ENCODE measurements at regions of chr14 and their contacts with region 1.

Region 1: GRCh38 chr14:58427281-58428117 is at the starts of genes KIAA0586 and TIMM9:
- DNase-seq: peak; percentile 95 to 97
- ATAC-seq: peak; percentile 99
- H3K4me3 ChIP-seq: peak within 1 kb of the TSS; percentile 62 to 98 (median 84)
- H3K27ac ChIP-seq: peak within 1 kb of the TSS; percentile 87 to 97 (median 91)
- H3K4me1 ChIP-seq: peaks cover 27 to 34% of the 10 kb centered on the region in 2 donors
- H3K27me3 ChIP-seq: no peaks in the 10 kb centered on the region
- CTCF ChIP-seq: peak in 2 of 5 experiments; percentile 25 to 32
- POLR2A ChIP-seq: peak; percentile 77 to 90
- total RNA-seq, gene KIAA0586: 10.0 to 13.9 (median 11.9) TPM
- total RNA-seq, gene TIMM9: 46.2 to 110 (median 86.8) TPM

Region 2: DNA sequence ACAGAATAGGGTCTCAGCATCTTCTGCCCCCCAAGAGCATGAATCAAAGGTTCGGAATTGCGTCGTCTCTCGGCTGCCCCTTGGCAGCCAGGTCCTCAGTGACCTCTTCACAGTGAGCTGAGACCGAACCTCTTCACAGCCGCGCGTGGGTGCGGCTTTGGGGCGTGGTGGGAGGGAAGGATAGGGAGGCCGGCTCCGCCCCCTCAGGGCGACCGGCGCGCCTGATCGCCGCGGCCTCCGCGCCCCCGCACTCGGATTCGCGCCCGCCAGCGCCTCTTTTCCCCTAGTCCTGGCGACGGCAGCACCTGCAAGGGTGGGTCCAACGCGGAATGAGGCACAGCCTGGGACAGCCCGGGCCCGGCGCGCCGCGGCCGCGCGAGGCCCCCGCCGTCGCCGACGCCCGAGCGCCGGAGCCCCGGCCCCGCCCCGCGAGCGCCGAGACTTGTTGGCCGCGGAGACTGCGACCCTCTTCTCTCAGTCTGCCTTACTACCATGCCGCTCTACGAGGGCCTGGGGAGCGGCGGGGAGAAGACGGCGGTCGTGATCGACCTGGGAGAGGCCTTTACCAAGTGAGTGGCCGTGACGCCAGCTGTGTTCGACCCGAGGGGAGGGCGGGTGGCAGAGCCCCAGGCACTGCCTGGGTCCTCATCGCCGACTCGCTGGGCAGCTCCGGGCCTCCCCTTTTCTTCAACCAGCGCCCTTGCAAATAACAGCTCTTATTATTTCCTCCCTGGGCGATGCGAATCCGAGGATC is 227.6 kb before region 1 on chr14 and contains the start of gene ACTR10:
- in situ Hi-C with region 1: no loop called
- intact Hi-C with region 1: loop called (anchors 10 kb)
- DNase-seq: peak; percentile 68 to 83
- ATAC-seq: peak; percentile 96
- H3K4me3 ChIP-seq: peak within 1 kb of the TSS; percentile 87 to 94 (median 90)
- H3K27ac ChIP-seq: peak within 1 kb of the TSS; percentile 92 to 94 (median 93)
- H3K4me1 ChIP-seq: peaks cover 4 to 14% of the 10 kb centered on the region in 2 donors
- H3K27me3 ChIP-seq: no peaks in the 10 kb centered on the region
- CTCF ChIP-seq: peak in 1 of 5 experiments; percentile 15
- POLR2A ChIP-seq: peak; percentile 41 to 54
- total RNA-seq, gene ACTR10: 70.6 to 104 (median 88.8) TPM

Region 3: DNA sequence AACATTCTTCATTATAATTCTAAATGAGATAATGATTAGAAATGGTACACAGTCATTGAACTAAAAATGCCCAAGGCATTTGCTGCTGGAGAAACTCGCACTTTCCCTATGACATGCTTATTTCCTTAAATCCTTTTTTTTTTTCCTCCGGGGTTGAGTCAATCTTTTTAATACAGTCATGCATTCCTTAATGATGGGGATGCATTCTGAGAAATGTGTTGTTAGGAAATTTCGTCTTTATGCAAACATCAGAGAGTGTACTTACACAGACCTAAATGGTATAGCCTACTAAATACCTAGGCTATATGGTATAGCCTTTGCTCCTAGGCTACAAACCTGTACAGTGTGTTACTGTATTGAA is 180.4 kb after region 1 on chr14:
- in situ Hi-C with region 1: no loop called
- intact Hi-C with region 1: no loop called
- DNase-seq: no peak
- ATAC-seq: no peak
- H3K4me3 ChIP-seq: no peak overlapping the region
- H3K27ac ChIP-seq: no peak overlapping the region
- H3K4me1 ChIP-seq: no peaks in the 10 kb centered on the region
- H3K27me3 ChIP-seq: no peaks in the 10 kb centered on the region
- CTCF ChIP-seq: no peak
- POLR2A ChIP-seq: no peak

Region 4: GRCh38 chr14:58635091-58635830 is 207.8 kb after region 1 on chr14:
- in situ Hi-C with region 1: no loop called
- intact Hi-C with region 1: no loop called
- DNase-seq: no peak
- ATAC-seq: no peak
- H3K4me3 ChIP-seq: no peak overlapping the region
- H3K27ac ChIP-seq: no peak overlapping the region
- H3K4me1 ChIP-seq: peaks cover 17 to 18% of the 10 kb centered on the region in 2 donors
- H3K27me3 ChIP-seq: no peaks in the 10 kb centered on the region
- CTCF ChIP-seq: no peak
- POLR2A ChIP-seq: no peak

Region 5: GRCh38 chr14:59301354-59301753 is 873.9 kb after region 1 on chr14:
- in situ Hi-C with region 1: no loop called
- intact Hi-C with region 1: no loop called
- DNase-seq: no peak
- ATAC-seq: no peak
- H3K4me3 ChIP-seq: no peak overlapping the region
- H3K27ac ChIP-seq: no peak overlapping the region
- H3K4me1 ChIP-seq: peaks cover 0 to 14% of the 10 kb centered on the region in 2 donors
- H3K27me3 ChIP-seq: no peaks in the 10 kb centered on the region
- CTCF ChIP-seq: no peak
- POLR2A ChIP-seq: no peak